ENCODE measurements at regions of chr1 and their contacts with region 1.

Region 1: GRCh38 chr1:11645670-11646265 is 8.5 kb downstream of the FBXO2 start:
- DNase-seq: no peak
- H3K4me3 ChIP-seq: no peak overlapping the region
- H3K27ac ChIP-seq: no peak overlapping the region
- H3K4me1 ChIP-seq: peaks cover 24% of the 10 kb centered on the region
- H3K27me3 ChIP-seq: peaks cover 9% of the 10 kb centered on the region
- CTCF ChIP-seq: peak; percentile 3 to 59 (median 52)
- POLR2A ChIP-seq: no peak

Region 2: GRCh38 chr1:11044849-11045427 is 600.8 kb before region 1 on chr1:
- intact Hi-C with region 1: loop called (anchors 5 kb)
- DNase-seq: no peak
- H3K4me3 ChIP-seq: no peak overlapping the region
- H3K27ac ChIP-seq: no peak overlapping the region
- H3K4me1 ChIP-seq: no peaks in the 10 kb centered on the region
- H3K27me3 ChIP-seq: no peaks in the 10 kb centered on the region
- CTCF ChIP-seq: no peak
- POLR2A ChIP-seq: no peak

Measured in vagina (tissue), 2 donors.